B cell (primary cell): ENCODE measurements at regions of chr7 and their contacts with region 1.

Region 1: GRCh38 chr7:2508327-2509215 is 11.0 kb upstream of the LFNG start:
- DNase-seq: peak; percentile 90
- ATAC-seq: peak; percentile 48
- H3K4me3 ChIP-seq: peak overlapping the region in 4 of 5 experiments; percentile 25 to 46 (median 34)
- H3K4me3 Mint-ChIP-seq: peak overlapping the region; percentile 88
- H3K27ac ChIP-seq: peak overlapping the region; percentile 99 to 100
- H3K27ac Mint-ChIP-seq: peak overlapping the region; percentile 99
- H3K4me1 ChIP-seq: peaks cover 58 to 63% of the 10 kb centered on the region in 2 donors
- H3K4me1 Mint-ChIP-seq: peaks cover 67% of the 10 kb centered on the region
- H3K27me3 ChIP-seq: no peaks in the 10 kb centered on the region
- H3K27me3 Mint-ChIP-seq: no peaks in the 10 kb centered on the region
- CTCF ChIP-seq: no peak

Region 2: DNA sequence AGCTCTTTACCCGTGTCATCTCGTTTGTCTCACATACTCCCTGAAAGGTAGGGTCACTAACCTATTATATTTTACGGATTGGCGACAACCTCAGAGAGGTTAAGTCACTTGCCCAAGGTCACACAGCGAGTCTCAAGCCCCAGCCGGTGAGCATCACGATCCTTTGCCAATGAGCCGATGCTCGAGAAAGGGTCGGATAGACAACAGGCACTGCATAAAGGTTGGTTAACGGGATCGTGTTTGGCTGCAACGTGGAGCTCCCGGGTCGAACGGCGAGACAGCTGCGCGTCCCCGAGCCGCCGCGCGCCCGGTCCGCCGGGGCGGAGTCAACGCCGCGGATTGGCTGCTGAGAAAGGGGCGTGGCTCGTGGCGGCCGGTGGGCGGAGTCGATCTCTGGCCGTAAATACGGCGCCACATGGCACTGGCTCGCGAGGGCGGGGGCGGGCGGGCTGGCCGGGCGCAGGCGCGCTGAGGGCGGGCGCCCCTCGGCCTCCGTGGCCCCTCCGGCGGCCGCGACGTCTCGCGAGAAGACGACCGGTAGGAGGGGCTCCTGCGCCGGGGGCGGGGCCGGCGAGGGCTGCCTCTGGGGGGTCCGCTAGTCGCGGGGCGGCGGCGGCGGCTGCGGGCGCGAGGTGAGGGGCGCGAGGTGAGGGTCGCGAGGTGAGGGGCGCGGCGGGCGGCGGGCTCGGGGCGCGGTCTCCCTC is 105.4 kb before region 1 on chr7 and contains the start of gene CHST12:
- CTCF ChIA-PET with region 1: no interaction called
- POLR2A ChIA-PET with region 1: interaction called, 7 read pairs
- intact Hi-C with region 1: loop called (anchors 1 kb)
- DNase-seq: peak; percentile 98
- ATAC-seq: peak; percentile 78
- H3K4me3 ChIP-seq: peak within 1 kb of the TSS; percentile 50 to 83 (median 77)
- H3K4me3 Mint-ChIP-seq: peak within 1 kb of the TSS; percentile 88
- H3K27ac ChIP-seq: peak within 1 kb of the TSS; percentile 27 to 72
- H3K27ac Mint-ChIP-seq: peak within 1 kb of the TSS; percentile 86
- H3K4me1 ChIP-seq: peaks cover 33 to 55% of the 10 kb centered on the region in 2 donors
- H3K4me1 Mint-ChIP-seq: peaks cover 46% of the 10 kb centered on the region
- H3K27me3 ChIP-seq: no peaks in the 10 kb centered on the region
- H3K27me3 Mint-ChIP-seq: no peaks in the 10 kb centered on the region
- CTCF ChIP-seq: no peak
- total RNA-seq, gene CHST12: 25.4 TPM in 2 replicates

Region 3: GRCh38 chr7:2519119-2519930 is 10.8 kb after region 1 on chr7 and contains the start of gene LFNG:
- CTCF ChIA-PET with region 1: interaction called, 23 read pairs
- POLR2A ChIA-PET with region 1: interaction called, 340 read pairs
- intact Hi-C with region 1: loop called (anchors 1 kb)
- DNase-seq: peak; percentile 94
- ATAC-seq: peak; percentile 80
- H3K4me3 ChIP-seq: peak within 1 kb of the TSS; percentile 84 to 100 (median 97)
- H3K4me3 Mint-ChIP-seq: peak within 1 kb of the TSS; percentile 99
- H3K27ac ChIP-seq: peak within 1 kb of the TSS; percentile 62 to 75
- H3K27ac Mint-ChIP-seq: peak within 1 kb of the TSS; percentile 96
- H3K4me1 ChIP-seq: peaks cover 40 to 49% of the 10 kb centered on the region in 2 donors
- H3K4me1 Mint-ChIP-seq: peaks cover 52% of the 10 kb centered on the region
- H3K27me3 ChIP-seq: no peaks in the 10 kb centered on the region
- H3K27me3 Mint-ChIP-seq: no peaks in the 10 kb centered on the region
- CTCF ChIP-seq: no peak
- total RNA-seq, gene LFNG: 208 and 221 TPM in 2 replicates

Region 4: DNA sequence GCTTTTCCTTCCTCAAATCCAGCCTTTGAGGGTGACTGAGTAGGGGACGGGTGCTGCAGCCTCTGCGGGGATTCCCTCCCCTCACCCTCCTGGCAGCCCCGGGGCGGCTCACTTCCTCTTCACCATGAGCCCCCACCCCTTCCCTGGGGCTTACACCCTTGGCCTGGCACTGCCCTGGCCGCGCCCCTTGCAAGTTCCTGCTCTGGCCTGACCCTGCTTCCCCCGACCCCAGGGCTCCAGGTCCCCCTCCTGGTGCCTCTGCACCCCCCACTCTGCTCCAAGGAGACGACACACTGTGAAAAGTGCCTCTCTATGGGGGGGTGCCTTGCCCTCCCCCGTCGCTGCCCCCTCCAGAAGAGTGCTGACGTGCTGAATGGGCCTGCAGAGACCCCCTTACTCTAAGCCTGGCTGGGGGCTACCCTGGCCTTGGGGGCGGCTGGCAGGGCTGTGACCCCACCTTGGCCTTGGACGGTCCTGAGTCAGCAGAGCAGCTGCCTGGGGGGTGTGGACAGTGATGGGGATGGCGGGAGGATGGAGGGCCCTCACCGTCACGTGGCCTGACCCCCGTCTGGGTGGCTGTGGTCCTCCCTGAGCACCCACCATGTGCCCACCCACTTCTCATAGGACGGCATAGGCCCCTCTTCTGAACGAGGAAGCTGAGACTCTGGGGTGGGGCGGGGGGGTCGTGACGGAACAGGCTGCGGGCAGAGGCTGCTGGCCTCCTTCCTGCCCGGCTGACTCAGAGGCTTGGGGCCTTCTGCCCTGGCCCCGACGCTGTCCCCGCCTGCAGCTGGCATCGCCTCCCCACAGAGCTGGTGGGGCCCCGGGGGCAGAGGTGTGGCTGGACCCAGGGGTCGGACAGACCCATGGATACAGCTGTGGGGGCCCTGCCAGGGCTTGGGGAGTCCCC is 20.8 kb after region 1 on chr7:
- CTCF ChIA-PET with region 1: interaction called, 34 read pairs
- POLR2A ChIA-PET with region 1: interaction called, 340 read pairs
- intact Hi-C with region 1: loop called (anchors 1 kb)
- DNase-seq: peak; percentile 94
- ATAC-seq: peak; percentile 65
- H3K4me3 ChIP-seq: peak overlapping the region in 4 of 5 experiments; percentile 38 to 52 (median 43)
- H3K4me3 Mint-ChIP-seq: peak overlapping the region; percentile 90
- H3K27ac ChIP-seq: peak overlapping the region; percentile 97
- H3K27ac Mint-ChIP-seq: peak overlapping the region; percentile 99
- H3K4me1 ChIP-seq: peaks cover 66 to 74% of the 10 kb centered on the region in 2 donors
- H3K4me1 Mint-ChIP-seq: peaks cover 67% of the 10 kb centered on the region
- H3K27me3 ChIP-seq: no peaks in the 10 kb centered on the region
- H3K27me3 Mint-ChIP-seq: no peaks in the 10 kb centered on the region
- CTCF ChIP-seq: no peak